ENCODE measurements at regions of chr3 and their contacts with region 1.

Region 1: GRCh38 chr3:44992555-44993470 is 16.8 kb downstream of the EXOSC7 start:
- DNase-seq: peak; percentile 59
- ATAC-seq: peak; percentile 72
- H3K4me3 Mint-ChIP-seq: peak overlapping the region; percentile 34
- H3K27ac Mint-ChIP-seq: peak overlapping the region; percentile 79
- H3K4me1 Mint-ChIP-seq: peaks cover 39% of the 10 kb centered on the region
- H3K27me3 Mint-ChIP-seq: no peaks in the 10 kb centered on the region
- CTCF ChIP-seq: peak; percentile 93

Region 2: GRCh38 chr3:44958411-44958810 is 34.4 kb before region 1 on chr3:
- CTCF ChIA-PET with region 1: no interaction called
- POLR2A ChIA-PET with region 1: no interaction called
- DNase-seq: no peak
- ATAC-seq: no peak
- H3K4me3 Mint-ChIP-seq: no peak overlapping the region
- H3K27ac Mint-ChIP-seq: no peak overlapping the region
- H3K4me1 Mint-ChIP-seq: peaks cover 5% of the 10 kb centered on the region
- H3K27me3 Mint-ChIP-seq: no peaks in the 10 kb centered on the region
- CTCF ChIP-seq: no peak

Region 3: GRCh38 chr3:44976002-44976815 is 16.6 kb before region 1 on chr3 and contains the starts of genes EXOSC7 and ZDHHC3:
- CTCF ChIA-PET with region 1: interaction called, 26 read pairs
- POLR2A ChIA-PET with region 1: no interaction called
- DNase-seq: peak; percentile 76
- ATAC-seq: peak; percentile 67
- H3K4me3 Mint-ChIP-seq: peak within 1 kb of the TSS; percentile 99
- H3K27ac Mint-ChIP-seq: peak within 1 kb of the TSS; percentile 99
- H3K4me1 Mint-ChIP-seq: peaks cover 24% of the 10 kb centered on the region
- H3K27me3 Mint-ChIP-seq: no peaks in the 10 kb centered on the region
- CTCF ChIP-seq: no peak
- total RNA-seq, gene EXOSC7: 85.7 to 96.4 TPM (median 93.0 TPM) in 3 replicates
- total RNA-seq, gene ZDHHC3: 57.7 to 59.1 TPM (median 58.0 TPM) in 3 replicates

Measured in WTC11 (cell line).